CD4-positive, alpha-beta memory T cell (primary cell): ENCODE measurements at regions of chr18 and their contacts with region 1.

Region 1: GRCh38 chr18:2776601-2777000 is 70.2 kb upstream of the EMILIN2 start:
- DNase-seq: no peak
- H3K4me3 ChIP-seq: no peak overlapping the region
- H3K4me3 Mint-ChIP-seq: no peak overlapping the region
- H3K27ac ChIP-seq: no peak overlapping the region
- H3K27ac Mint-ChIP-seq: no peak overlapping the region
- H3K4me1 ChIP-seq: no peaks in the 10 kb centered on the region
- H3K4me1 Mint-ChIP-seq: peaks cover 0 to 13% (median 6%) of the 10 kb centered on the region in 4 donors
- H3K27me3 ChIP-seq: no peaks in the 10 kb centered on the region
- H3K27me3 Mint-ChIP-seq: no peaks in the 10 kb centered on the region

Region 2: GRCh38 chr18:2564373-2564772 is 212.2 kb before region 1 on chr18:
- CTCF ChIA-PET with region 1: no interaction called
- POLR2A ChIA-PET with region 1: no interaction called
- intact Hi-C with region 1: loop called (anchors 5 kb)
- DNase-seq: no peak
- H3K4me3 ChIP-seq: no peak overlapping the region
- H3K4me3 Mint-ChIP-seq: no peak overlapping the region
- H3K27ac ChIP-seq: no peak overlapping the region
- H3K27ac Mint-ChIP-seq: no peak overlapping the region
- H3K4me1 ChIP-seq: peaks cover 10% of the 10 kb centered on the region
- H3K4me1 Mint-ChIP-seq: peaks cover 22 to 36% (median 24%) of the 10 kb centered on the region in 4 donors
- H3K27me3 ChIP-seq: no peaks in the 10 kb centered on the region
- H3K27me3 Mint-ChIP-seq: no peaks in the 10 kb centered on the region

Region 3: GRCh38 chr18:2723207-2723606 is 53.4 kb before region 1 on chr18:
- CTCF ChIA-PET with region 1: no interaction called
- POLR2A ChIA-PET with region 1: no interaction called
- intact Hi-C with region 1: loop called (anchors 10 kb)
- DNase-seq: no peak
- H3K4me3 ChIP-seq: no peak overlapping the region
- H3K4me3 Mint-ChIP-seq: no peak overlapping the region
- H3K27ac ChIP-seq: no peak overlapping the region
- H3K27ac Mint-ChIP-seq: peak overlapping the region in 4 of 7 donors; percentile 50 to 77 (median 59)
- H3K4me1 ChIP-seq: peaks cover 9% of the 10 kb centered on the region
- H3K4me1 Mint-ChIP-seq: peaks cover 30 to 55% (median 38%) of the 10 kb centered on the region in 4 donors
- H3K27me3 ChIP-seq: no peaks in the 10 kb centered on the region
- H3K27me3 Mint-ChIP-seq: no peaks in the 10 kb centered on the region